Activated naive CD4-positive, alpha-beta T cell treated with anti-CD3 and anti-CD28 coated beads for 36 hours (primary cell): ENCODE measurements at regions of chr4 and their contacts with region 1.

Region 1: GRCh38 chr4:89434364-89434988 is 126.9 kb upstream of the GPRIN3 start:
- DNase-seq: no peak
- H3K4me3 Mint-ChIP-seq: no peak overlapping the region
- H3K27ac Mint-ChIP-seq: no peak overlapping the region
- H3K4me1 Mint-ChIP-seq: peaks cover 14% of the 10 kb centered on the region
- H3K27me3 Mint-ChIP-seq: no peaks in the 10 kb centered on the region

Region 2: DNA sequence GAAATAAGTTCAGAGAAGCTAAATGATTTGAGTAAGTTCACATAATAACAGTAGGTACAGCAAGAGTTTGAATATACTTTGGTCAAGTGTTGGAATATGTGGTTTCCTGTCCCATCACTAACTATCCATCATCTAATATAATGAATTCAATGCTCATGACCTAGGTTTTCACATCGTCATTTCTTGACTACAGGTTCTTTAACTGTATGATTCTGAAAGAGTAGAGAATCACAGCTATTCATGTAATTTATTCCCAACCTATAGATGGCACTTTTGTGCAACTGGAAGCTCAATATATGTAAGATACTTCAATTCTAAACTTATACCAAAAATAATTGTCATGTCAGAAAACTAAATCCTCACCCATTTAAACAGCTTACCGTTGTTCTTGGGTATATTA is 270.1 kb before region 1 on chr4:
- CTCF ChIA-PET with region 1: interaction called, 10 read pairs
- intact Hi-C with region 1: loop called (anchors 1 kb)
- DNase-seq: no peak
- H3K4me3 Mint-ChIP-seq: no peak overlapping the region
- H3K27ac Mint-ChIP-seq: no peak overlapping the region
- H3K4me1 Mint-ChIP-seq: no peaks in the 10 kb centered on the region
- H3K27me3 Mint-ChIP-seq: peaks cover 4% of the 10 kb centered on the region

Region 3: DNA sequence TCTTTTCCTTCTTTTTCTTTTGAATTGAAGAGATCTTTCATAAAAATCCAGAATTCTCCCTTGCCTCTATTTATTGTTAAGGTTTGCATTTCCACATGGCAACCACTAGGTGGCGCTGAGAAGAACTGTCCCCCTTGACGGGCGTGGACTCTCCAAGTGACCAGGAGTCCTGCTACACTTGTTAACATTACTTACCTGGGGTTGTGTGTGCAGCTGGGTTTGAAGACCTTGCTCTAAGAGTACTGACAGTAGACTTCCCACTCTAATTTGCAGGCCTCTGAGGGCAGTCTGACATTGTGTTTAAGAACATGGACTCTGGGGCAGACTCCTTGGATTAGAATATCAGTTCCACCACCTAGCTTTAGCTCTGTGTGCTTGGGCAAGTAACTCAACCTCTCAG is 179.6 kb before region 1 on chr4:
- CTCF ChIA-PET with region 1: interaction called, 12 read pairs
- intact Hi-C with region 1: loop called (anchors 1 kb)
- DNase-seq: peak; percentile 47
- H3K4me3 Mint-ChIP-seq: no peak overlapping the region
- H3K27ac Mint-ChIP-seq: no peak overlapping the region
- H3K4me1 Mint-ChIP-seq: peaks cover 55% of the 10 kb centered on the region
- H3K27me3 Mint-ChIP-seq: no peaks in the 10 kb centered on the region

Region 4: GRCh38 chr4:89509708-89510281 is 75.3 kb after region 1 on chr4:
- CTCF ChIA-PET with region 1: interaction called, 3 read pairs
- intact Hi-C with region 1: loop called (anchors 1 kb)
- DNase-seq: peak; percentile 44
- H3K4me3 Mint-ChIP-seq: no peak overlapping the region
- H3K27ac Mint-ChIP-seq: no peak overlapping the region
- H3K4me1 Mint-ChIP-seq: peaks cover 17% of the 10 kb centered on the region
- H3K27me3 Mint-ChIP-seq: no peaks in the 10 kb centered on the region